Activated B cell treated with CpG ODN at 0.5 μM for 24 hours (primary cell): ENCODE measurements at regions of chr3 and their contacts with region 1.

Region 1: GRCh38 chr3:158205994-158206393 is 96.1 kb downstream of the RSRC1 start:
- DNase-seq: no peak
- ATAC-seq: no peak
- H3K4me3 Mint-ChIP-seq: no peak overlapping the region
- H3K27ac Mint-ChIP-seq: no peak overlapping the region
- H3K4me1 Mint-ChIP-seq: peaks cover 4% of the 10 kb centered on the region
- H3K27me3 Mint-ChIP-seq: no peaks in the 10 kb centered on the region
- CTCF ChIP-seq: no peak

Region 2: DNA sequence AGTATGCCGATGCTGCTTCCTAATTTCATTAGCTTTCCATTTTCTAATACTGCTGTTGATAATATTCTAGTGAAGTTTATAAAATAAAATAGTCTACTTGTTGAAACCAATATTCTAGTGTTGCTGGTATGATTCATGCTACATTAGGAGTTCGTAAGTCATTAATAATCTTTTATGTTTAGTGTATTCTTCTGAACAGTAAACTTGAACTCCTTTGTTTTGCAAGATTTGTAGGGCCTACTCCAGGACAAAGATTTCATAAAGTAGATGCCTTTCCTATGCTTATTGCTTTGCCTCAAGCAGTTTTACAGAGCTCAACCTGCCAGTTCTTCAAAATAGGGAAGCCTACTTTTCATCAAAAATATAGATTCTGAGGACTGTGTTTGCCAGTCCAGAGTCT is 15.4 kb after region 1 on chr3:
- CTCF ChIA-PET with region 1: no interaction called
- POLR2A ChIA-PET with region 1: no interaction called
- intact Hi-C with region 1: loop called (anchors 2 kb)
- DNase-seq: no peak
- ATAC-seq: no peak
- H3K4me3 Mint-ChIP-seq: no peak overlapping the region
- H3K27ac Mint-ChIP-seq: no peak overlapping the region
- H3K4me1 Mint-ChIP-seq: no peaks in the 10 kb centered on the region
- H3K27me3 Mint-ChIP-seq: no peaks in the 10 kb centered on the region
- CTCF ChIP-seq: no peak